ENCODE measurements at regions of chr1 and their contacts with region 1.

Region 1: GRCh38 chr1:58155418-58156123 is 391.0 kb downstream of the OMA1 start:
- DNase-seq: peak; percentile 21 to 69
- H3K4me3 ChIP-seq: no peak overlapping the region
- H3K27ac ChIP-seq: no peak overlapping the region
- H3K4me1 ChIP-seq: peaks cover 4 to 22% (median 12%) of the 10 kb centered on the region in 4 experiments; a peak in 6 of 7 replicates
- H3K27me3 ChIP-seq: no peaks in the 10 kb centered on the region
- CTCF ChIP-seq: peak; percentile 70 to 88 (median 71)
- EP300 ChIP-seq: no peak
- POLR2A ChIP-seq: no peak
- RAD21 ChIP-seq: peak; percentile 71 to 78

Region 2: DNA sequence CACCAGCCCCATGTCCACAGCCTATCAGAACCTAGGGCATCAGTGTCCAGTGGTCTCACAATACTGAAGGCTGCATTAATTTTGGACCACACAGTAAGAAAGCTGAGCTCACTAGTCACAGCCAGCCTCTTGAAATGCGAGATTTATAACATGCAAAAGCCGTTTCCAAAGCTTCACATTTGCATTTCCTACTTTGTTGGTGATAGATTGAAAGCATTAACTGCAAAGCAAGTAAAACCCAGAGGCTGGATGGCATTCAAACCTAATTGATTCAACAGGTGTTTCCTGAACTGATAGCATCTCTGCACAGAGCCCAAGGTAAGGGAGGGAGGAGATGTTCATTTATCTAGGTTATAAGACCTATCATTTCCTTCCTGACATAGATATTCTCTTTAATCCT is 19.2 kb before region 1 on chr1:
- CTCF ChIA-PET with region 1: interaction called, 50 read pairs
- POLR2A ChIA-PET with region 1: no interaction called
- DNase-seq: no peak
- H3K4me3 ChIP-seq: no peak overlapping the region
- H3K27ac ChIP-seq: no peak overlapping the region
- H3K4me1 ChIP-seq: peaks cover 0 to 8% (median 7%) of the 10 kb centered on the region in 4 experiments; a peak in 4 of 7 replicates
- H3K27me3 ChIP-seq: no peaks in the 10 kb centered on the region
- CTCF ChIP-seq: no peak
- EP300 ChIP-seq: no peak
- POLR2A ChIP-seq: no peak
- RAD21 ChIP-seq: no peak

Region 3: DNA sequence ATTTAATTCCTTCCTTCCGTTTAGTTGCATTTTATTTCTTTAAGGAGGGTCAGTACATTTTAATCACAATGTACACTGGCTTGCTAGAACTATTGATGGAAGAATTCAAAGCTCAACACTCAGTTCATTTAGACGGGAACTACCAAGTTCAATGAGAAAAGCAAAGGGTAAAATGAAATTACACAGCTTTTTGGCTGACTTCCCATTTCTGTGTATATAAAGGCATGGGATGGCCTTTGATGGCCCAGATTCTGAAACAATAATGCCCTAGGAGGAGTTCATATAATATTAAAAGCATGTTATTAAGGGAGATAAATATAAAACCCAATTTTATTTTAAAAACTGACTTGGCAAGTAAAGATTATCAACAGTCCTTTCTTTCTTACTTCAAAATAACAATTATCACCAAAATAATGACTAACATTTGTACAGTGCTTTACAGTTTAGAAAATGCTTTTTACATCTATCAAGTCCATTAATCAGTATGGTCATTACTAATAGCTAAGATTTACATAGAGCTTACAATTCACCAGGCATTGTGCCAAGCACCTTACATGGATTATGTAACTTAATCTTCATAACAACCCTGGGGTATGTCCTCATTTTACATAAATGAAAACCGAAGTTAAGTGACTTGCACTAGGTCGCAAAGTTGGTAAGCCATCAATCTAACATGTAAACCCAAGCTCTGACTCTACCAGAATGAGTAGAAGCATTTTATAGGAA is 11.4 kb before region 1 on chr1:
- CTCF ChIA-PET with region 1: interaction called, 50 read pairs
- POLR2A ChIA-PET with region 1: no interaction called
- DNase-seq: no peak
- H3K4me3 ChIP-seq: no peak overlapping the region
- H3K27ac ChIP-seq: no peak overlapping the region
- H3K4me1 ChIP-seq: peaks cover 0 to 3% (median 0%) of the 10 kb centered on the region in 4 experiments; a peak in 1 of 7 replicates
- H3K27me3 ChIP-seq: no peaks in the 10 kb centered on the region
- CTCF ChIP-seq: no peak
- EP300 ChIP-seq: no peak
- POLR2A ChIP-seq: no peak
- RAD21 ChIP-seq: no peak

Region 4: DNA sequence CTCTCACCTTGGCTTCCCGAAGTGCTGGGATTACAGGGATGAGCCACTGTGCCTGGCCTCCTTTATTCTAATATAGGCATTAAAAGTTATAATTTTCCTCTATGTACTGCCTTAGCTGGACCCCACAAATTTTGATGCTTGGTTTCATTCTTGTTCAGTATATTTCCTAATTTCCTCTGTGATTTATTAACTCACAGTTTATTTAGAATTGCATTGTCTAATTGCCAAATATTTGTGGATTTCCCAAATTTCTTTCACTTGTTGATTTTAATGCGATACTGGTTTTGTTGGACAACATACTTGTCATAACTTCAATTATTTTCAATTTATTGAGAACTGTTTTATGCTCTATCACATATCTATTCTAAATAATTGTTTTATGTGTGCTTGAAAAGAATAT is 25.0 kb after region 1 on chr1:
- CTCF ChIA-PET with region 1: no interaction called
- POLR2A ChIA-PET with region 1: no interaction called
- DNase-seq: no peak
- H3K4me3 ChIP-seq: no peak overlapping the region
- H3K27ac ChIP-seq: no peak overlapping the region
- H3K4me1 ChIP-seq: no peaks in the 10 kb centered on the region
- H3K27me3 ChIP-seq: no peaks in the 10 kb centered on the region
- CTCF ChIP-seq: no peak
- EP300 ChIP-seq: no peak
- POLR2A ChIP-seq: no peak
- RAD21 ChIP-seq: no peak